ENCODE measurements at regions of chr16 and their contacts with region 1.

Region 1: GRCh38 chr16:58000706-58001676 is at the start of gene USB1:
- DNase-seq: peak; percentile 89
- H3K4me3 ChIP-seq: peak within 1 kb of the TSS; percentile 85
- H3K27ac ChIP-seq: peak within 1 kb of the TSS; percentile 78
- H3K4me1 ChIP-seq: peaks cover 19% of the 10 kb centered on the region
- H3K27me3 ChIP-seq: no peaks in the 10 kb centered on the region
- CTCF ChIP-seq: peak; percentile 58
- total RNA-seq, gene USB1: 99.5 and 106 TPM in 2 replicates

Region 2: GRCh38 chr16:57576429-57576870 is 424.5 kb before region 1 on chr16:
- CTCF ChIA-PET with region 1: no interaction called
- POLR2A ChIA-PET with region 1: no interaction called
- intact Hi-C with region 1: loop called (anchors 5 kb)
- DNase-seq: peak; percentile 75
- H3K4me3 ChIP-seq: no peak overlapping the region
- H3K27ac ChIP-seq: no peak overlapping the region
- H3K4me1 ChIP-seq: no peaks in the 10 kb centered on the region
- H3K27me3 ChIP-seq: no peaks in the 10 kb centered on the region
- CTCF ChIP-seq: peak; percentile 97

Region 3: DNA sequence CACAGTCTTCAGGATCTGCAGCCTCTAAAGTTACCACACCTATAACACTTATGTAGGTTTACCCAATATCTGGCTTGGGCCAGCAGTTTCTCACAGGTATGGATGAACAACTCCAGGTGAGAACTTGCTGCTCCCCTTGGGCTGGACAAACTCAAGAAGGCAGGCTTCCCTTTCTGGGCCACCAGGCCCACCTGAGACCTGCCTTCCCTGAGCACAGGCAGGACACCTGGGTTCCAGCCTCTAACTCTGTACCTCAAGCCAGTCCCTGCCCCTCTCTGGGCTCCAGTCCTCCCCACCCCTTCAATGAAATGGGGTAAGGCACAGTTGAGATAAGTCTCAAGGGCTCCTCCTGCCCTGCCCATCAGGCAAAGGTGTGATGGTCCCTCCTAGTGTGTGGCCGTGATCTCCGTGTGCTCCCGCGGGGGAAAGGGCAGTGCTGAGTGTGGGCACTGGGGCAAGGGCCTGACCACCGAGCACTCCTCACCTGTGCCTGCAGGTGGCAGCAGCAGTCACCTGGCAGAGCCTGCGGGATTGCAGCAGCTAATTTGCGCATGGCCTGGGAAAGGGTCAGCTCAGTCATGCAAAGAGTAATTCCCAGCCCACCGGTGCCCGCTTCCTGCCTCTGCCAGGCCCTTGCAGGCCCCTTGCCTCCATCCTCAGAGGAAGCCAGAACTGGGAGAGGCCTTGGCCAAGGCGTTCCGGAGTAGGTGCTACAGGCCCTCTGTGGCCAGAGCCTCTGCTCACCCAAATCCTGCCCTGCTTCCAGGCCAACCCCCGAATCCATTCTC is 400.7 kb before region 1 on chr16:
- CTCF ChIA-PET with region 1: no interaction called
- POLR2A ChIA-PET with region 1: no interaction called
- intact Hi-C with region 1: no loop called
- DNase-seq: peak; percentile 26
- H3K4me3 ChIP-seq: no peak overlapping the region
- H3K27ac ChIP-seq: no peak overlapping the region
- H3K4me1 ChIP-seq: no peaks in the 10 kb centered on the region
- H3K27me3 ChIP-seq: no peaks in the 10 kb centered on the region
- CTCF ChIP-seq: peak; percentile 67

Region 4: DNA sequence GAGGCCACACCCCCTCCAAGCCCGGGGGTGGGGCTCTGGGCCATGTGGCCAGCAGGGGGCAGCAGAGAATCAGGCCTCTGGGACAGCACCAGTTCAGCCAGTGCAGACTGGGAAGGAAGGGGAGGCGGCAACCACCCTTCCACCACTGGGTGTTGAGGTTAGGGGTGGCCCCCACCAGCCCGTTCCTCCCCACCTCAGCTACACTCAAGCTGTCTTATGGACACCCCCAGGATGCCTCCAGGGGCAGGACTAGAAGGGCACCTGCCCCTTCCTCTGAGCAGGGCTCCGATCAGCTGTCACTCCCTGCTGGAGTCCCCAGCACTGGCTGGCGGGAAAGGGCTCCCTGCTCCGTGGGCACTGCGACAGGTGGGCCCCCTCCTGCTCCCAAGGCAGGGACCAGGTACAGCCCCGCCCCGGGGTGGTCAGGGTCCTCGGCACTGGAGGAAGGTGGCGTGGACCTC is 243.6 kb before region 1 on chr16:
- CTCF ChIA-PET with region 1: interaction called, 3 read pairs
- POLR2A ChIA-PET with region 1: no interaction called
- intact Hi-C with region 1: loop called (anchors 5 kb)
- DNase-seq: peak; percentile 90
- H3K4me3 ChIP-seq: no peak overlapping the region
- H3K27ac ChIP-seq: peak overlapping the region; percentile 78
- H3K4me1 ChIP-seq: peaks cover 28% of the 10 kb centered on the region
- H3K27me3 ChIP-seq: no peaks in the 10 kb centered on the region
- CTCF ChIP-seq: peak; percentile 96

Region 5: DNA sequence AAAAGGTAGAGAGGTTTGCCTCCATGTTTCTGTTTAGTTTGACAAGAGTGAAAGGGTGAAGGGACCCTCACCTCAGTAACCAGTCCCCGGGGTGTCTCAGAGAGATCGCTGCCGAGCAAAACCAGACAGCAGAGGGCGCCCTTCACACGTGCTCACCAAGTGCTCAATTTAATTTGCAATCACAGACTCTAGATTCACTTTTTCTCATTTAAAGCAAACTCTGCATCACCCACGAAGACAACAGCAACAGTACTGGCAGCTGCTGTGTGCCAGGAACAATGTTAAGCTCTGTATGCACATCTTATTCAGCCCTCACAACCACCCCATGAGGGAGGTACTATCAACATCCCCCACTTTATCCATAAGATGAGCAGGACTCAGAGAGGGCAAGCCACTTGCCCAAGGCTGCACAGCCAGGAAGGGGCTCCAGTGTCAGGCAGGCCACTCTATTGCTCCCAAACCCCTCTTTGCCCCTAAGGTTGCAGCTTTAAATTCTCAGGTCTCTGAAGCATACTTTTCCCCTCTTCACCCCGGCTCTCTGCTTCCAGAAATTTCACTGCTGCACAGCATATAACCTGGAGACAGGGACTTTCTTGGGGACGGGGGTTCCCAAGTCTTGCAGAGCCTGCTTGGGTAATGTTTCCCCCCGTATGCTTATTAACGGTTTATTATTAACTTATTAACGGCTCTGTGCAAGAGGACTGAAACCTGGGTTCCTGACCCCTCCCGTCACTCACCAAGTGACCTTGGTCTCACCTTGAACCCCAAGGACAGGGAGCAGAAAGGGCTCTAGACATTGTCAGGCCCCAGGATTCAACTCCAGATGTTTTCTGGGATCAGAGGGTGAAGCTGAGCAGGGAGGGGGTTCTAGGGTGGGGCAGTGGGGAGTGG is 101.0 kb before region 1 on chr16:
- CTCF ChIA-PET with region 1: interaction called, 3 read pairs
- POLR2A ChIA-PET with region 1: no interaction called
- intact Hi-C with region 1: loop called (anchors 1 kb)
- DNase-seq: peak; percentile 79
- H3K4me3 ChIP-seq: no peak overlapping the region
- H3K27ac ChIP-seq: no peak overlapping the region
- H3K4me1 ChIP-seq: no peaks in the 10 kb centered on the region
- H3K27me3 ChIP-seq: no peaks in the 10 kb centered on the region
- CTCF ChIP-seq: peak; percentile 94

Measured in A673 (cell line).